Right ventricle myocardium superior (tissue), 1 donor: ENCODE measurements at regions of chr3 and their contacts with region 1.

Region 1: DNA sequence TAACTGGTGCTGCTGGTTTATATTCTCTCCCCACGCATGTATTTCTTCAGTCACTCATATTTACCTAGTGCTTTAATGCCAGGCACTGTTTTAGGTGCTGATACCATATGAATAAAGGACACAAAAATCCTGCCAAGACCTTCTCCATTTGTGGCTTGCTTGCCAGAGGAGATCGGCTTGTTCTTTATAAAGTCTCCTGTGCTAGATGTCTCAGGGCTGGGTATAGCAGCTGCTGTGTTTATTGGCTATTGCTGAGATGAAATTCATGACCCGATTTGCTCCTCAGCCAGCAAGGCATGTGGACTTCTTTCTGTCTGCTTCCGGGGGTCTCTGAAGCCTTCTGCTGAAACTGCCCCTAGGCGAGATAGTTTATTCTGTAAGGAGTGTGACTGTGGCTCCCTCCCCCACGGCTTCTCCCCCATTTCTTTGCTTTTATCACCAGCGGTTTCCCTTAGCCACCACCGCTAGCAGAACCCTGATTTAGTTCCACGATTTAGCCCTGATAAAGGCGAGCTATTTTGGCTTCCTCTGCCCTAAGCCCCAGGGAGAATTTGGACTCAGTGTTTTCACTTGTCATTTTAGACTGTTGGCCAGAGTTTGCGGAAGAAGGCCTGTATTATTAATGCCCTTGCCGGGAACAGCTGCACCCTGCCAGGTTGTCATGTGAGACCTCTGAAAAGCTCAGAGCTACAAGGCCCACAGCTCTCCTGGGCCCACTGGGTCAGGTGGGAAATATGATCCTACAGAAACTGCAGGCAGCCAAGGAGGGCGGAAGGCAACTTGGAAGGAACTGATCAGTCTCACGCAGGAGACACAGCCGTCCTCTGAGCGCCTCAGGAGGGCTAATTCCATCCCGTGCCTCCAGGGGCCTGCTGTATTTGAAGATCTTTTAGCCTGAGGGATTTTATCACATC is 46.8 kb downstream of the ST6GAL1 start:
- DNase-seq: peak; percentile 81
- ATAC-seq: peak; percentile 85

Region 2: DNA sequence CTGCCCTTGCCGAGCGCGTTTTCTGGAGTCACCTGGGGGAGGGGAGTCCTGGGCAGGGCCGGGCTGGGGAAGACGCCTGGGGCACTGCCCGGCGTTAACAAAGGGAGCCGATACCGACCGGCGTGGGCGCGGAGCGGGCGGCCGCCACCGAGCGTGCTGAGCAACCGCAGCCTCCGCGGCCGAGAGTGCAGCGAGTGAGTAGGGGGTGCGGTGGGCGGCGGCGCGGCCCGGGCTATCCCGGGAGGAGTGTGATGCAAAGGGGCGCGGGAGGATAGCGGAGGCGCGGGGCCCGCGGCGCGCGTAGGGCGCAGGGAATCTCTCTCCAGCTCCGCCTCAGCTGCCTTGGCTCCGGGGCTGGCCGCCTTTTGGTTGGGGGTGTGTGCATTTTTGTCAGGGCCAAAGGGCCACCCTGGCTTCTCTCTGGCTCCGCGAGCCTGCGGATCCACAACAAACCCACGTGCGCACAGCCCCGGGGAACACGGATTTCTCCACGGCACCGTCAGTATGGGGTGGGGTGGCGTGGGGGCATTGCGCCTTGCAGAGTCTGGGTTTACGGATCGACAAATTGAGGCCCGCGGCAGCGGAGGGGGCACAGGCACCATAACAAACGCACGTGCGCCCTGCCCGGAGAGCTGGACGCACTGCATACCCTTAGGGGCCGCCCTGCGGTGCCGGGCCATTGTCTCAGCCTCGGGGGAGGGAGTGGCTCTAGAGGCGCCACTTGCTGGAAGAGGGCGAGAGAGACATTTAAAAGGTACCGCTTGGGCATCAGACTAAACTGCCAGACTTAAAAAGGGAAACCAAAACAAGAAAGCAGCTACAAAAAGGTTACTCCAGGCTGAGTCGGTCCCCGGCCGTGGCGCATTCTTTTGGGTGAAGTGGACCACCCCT is 46.2 kb before region 1 on chr3:
- intact Hi-C with region 1: loop called (anchors 5 kb)
- DNase-seq: peak; percentile 85
- ATAC-seq: peak; percentile 88